T-cell (primary cell): ENCODE measurements at regions of chr2 and their contacts with region 1.

Region 1: DNA sequence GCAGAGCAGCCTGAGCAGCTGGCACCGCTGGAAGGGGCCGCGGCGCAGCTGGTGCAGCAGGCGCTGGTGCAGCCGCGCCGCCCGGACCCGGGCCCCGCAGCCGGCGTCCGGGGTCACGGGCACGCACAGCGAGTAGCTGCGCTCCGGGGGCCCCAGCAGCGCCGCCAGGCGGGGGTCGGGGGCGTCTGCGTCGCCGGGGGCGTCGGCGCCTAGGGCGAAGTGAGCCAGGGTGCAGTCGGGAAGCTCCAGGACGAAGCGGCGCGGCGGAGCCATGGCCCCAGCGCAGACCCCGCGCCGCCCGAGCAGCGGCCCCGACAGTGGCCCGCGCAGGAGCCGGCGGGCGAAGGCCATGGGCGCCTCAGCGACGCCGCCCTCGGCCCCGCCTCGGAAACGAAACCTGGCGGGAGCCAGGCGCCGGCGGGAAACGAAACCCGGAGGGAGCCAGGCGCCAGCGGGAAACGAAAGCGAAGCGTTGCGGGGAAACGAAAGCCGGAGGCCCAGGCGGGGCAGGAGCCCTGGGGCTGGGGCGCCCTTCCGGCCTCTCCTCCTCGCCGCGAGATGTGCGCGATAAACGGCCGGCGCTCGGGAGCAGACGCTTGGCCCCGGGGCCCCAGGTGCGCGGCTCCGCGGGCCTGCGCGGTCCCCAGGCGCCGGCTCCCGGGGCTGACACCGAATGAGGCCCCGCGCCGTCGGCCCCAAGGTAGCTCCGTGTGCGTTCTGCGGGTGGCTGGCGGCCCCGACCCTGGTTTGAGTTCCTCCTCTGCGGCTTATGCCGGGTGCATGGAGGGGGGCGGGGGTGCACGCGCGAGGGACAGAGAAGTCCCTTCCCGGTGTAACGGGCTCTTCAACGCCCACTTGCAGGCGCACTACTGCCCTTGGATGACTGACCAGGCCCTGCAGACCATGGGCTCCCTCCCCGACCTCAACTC is at the start of gene CMPK2:
- DNase-seq: peak; percentile 54 to 86 (median 69)
- ATAC-seq: peak; percentile 75 to 81 (median 78)
- H3K4me3 ChIP-seq: peak within 1 kb of the TSS; percentile 81 to 86
- H3K4me3 Mint-ChIP-seq: peak within 1 kb of the TSS; percentile 94 to 95 (median 94)
- H3K27ac ChIP-seq: peak within 1 kb of the TSS; percentile 50
- H3K27ac Mint-ChIP-seq: peak within 1 kb of the TSS; percentile 93 to 98
- H3K4me1 ChIP-seq: peaks cover 2 to 16% of the 10 kb centered on the region in 2 experiments
- H3K4me1 Mint-ChIP-seq: peaks cover 28 to 45% (median 36%) of the 10 kb centered on the region in 3 donors
- H3K27me3 ChIP-seq: no peaks in the 10 kb centered on the region
- H3K27me3 Mint-ChIP-seq: no peaks in the 10 kb centered on the region
- total RNA-seq, gene CMPK2: 6.5 to 15.2 (median 9.1) TPM

Region 2: DNA sequence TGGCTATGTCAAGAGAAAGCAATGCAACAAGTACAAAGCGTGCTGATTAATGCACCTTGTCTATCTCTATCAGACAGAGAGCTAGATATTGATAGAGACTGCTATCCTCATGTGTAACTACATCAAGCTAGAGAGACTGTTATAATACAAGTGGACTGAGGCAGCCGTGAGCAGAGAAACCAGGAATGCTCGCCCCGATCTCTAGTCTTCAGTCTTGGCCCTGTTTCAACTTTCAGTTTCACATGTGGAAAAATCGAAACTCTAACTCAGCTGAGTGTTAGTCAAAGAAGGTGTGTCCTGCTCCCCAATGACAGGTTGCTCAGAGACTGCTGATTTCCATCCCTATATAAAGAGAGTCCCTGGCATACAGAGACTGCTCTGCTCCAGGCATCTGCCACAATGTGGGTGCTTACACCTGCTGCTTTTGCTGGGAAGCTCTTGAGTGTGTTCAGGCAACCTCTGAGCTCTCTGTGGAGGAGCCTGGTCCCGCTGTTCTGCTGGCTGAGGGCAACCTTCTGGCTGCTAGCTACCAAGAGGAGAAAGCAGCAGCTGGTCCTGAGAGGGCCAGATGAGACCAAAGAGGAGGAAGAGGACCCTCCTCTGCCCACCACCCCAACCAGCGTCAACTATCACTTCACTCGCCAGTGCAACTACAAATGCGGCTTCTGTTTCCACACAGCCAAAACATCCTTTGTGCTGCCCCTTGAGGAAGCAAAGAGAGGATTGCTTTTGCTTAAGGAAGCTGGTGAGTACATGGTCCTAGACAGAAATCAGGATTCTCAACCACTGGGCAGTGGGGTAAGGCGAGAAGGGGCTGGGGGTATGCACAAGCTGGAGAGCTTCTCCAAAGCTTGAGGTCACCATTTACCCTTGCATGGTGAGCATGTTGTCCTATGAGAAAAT is 12.0 kb after region 1 on chr2 and contains the start of gene RSAD2:
- CTCF ChIA-PET with region 1: interaction called, 22 to 25 read pairs
- POLR2A ChIA-PET with region 1: interaction called, 4 to 5 read pairs
- DNase-seq: peak in 18 of 35 experiments; percentile 4 to 77 (median 11)
- ATAC-seq: peak; percentile 76 to 83 (median 80)
- H3K4me3 ChIP-seq: peak within 1 kb of the TSS; percentile 55 to 71
- H3K4me3 Mint-ChIP-seq: peak within 1 kb of the TSS; percentile 74 to 91 (median 87)
- H3K27ac ChIP-seq: peak within 1 kb of the TSS; percentile 58
- H3K27ac Mint-ChIP-seq: peak within 1 kb of the TSS; percentile 89 to 94
- H3K4me1 ChIP-seq: peaks cover 32 to 53% of the 10 kb centered on the region in 2 experiments
- H3K4me1 Mint-ChIP-seq: peaks cover 63 to 79% (median 73%) of the 10 kb centered on the region in 3 donors
- H3K27me3 ChIP-seq: no peaks in the 10 kb centered on the region
- H3K27me3 Mint-ChIP-seq: no peaks in the 10 kb centered on the region
- total RNA-seq, gene RSAD2: 3.2 to 10.7 (median 7.2) TPM

Region 3: DNA sequence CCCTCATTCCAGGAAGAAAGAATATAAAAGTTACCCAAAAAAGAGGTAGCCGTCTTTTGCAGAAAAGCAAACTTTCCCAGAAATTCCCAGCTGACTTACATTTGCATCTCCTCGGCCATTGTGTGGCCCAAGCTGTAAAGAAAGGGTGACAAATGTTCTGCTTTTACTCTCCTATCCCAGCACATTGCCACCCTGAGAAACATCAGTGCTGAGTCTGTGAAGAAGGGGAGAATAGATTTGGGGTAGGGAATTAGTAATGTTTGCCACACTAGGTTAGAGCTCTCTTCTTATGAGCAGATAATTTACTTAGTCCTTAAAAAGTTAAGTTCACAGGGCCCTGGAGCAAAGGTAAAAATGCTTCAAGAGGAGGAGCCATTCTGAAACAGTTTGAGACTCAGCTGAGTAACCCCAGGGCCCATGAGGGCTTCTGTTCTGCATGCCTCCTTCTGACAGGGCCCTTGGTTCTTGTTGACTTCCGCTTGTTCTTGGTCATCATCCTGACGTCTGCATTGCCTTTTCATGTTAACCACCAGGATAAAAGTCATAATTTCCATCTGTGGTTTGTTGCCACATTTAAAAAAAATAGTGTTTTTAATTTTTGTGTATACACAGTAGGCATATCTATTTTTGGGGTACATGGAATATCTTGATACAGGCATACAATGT is 602.3 kb after region 1 on chr2:
- CTCF ChIA-PET with region 1: no interaction called
- POLR2A ChIA-PET with region 1: no interaction called
- DNase-seq: peak in 32 of 35 experiments; percentile 14 to 76 (median 35)
- ATAC-seq: peak; percentile 70 to 98 (median 80)
- H3K4me3 ChIP-seq: no peak overlapping the region
- H3K4me3 Mint-ChIP-seq: peak overlapping the region in 1 of 3 donors; percentile 8
- H3K27ac ChIP-seq: peak overlapping the region; percentile 38
- H3K27ac Mint-ChIP-seq: peak overlapping the region; percentile 68 to 74
- H3K4me1 ChIP-seq: peaks cover 6 to 20% of the 10 kb centered on the region in 2 experiments
- H3K4me1 Mint-ChIP-seq: peaks cover 29 to 37% (median 35%) of the 10 kb centered on the region in 3 donors
- H3K27me3 ChIP-seq: no peaks in the 10 kb centered on the region
- H3K27me3 Mint-ChIP-seq: no peaks in the 10 kb centered on the region